CD8-positive, alpha-beta T cell (primary cell): ENCODE measurements at regions of chr7 and their contacts with region 1.

Region 1: DNA sequence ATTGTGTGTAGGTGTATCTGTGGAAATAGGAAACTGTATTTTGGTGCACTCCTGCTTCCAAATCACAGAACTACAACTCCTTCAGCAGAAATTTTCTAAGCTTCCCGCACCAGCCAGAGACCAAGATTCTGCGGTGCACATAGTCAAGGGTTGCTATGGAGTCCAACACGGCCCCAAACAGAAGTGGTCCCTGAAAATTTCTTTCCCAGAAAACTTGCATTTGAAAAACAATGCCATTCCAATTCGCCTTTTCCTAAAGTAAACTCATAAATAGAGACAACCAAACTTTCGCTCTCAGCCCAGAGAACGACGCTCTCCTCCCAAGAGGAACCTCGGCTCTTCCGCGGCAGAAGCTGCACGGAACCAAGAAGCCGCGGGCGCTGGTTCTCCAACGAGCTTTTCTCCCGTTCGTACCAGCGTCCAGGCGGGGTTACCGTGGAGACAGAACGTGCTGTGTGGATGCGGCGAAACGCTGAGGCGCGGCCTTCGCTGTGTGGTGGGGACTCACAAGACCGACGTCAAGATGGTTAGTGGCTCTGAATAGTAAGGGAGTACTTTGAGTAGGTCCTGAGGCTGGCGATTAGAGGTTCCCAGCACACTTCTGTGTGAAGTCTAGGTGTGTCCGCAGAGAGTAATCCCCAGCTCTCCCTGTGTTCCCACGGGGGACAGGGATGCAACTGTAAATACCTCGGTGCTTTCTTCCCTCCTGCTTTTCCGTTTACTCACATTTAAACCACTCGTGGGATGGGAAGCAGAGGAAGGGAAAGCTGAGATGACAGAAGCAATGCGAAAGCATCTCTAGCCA is 24.0 kb upstream of the ZC3HAV1 start:
- DNase-seq: peak; percentile 81 to 94 (median 89)
- ATAC-seq: peak; percentile 98
- H3K4me3 ChIP-seq: peak overlapping the region; percentile 60 to 63
- H3K4me3 Mint-ChIP-seq: peak overlapping the region; percentile 87
- H3K27ac ChIP-seq: peak overlapping the region; percentile 62 to 63
- H3K27ac Mint-ChIP-seq: peak overlapping the region; percentile 83
- H3K4me1 ChIP-seq: peaks cover 7% of the 10 kb centered on the region
- H3K4me1 Mint-ChIP-seq: peaks cover 13% of the 10 kb centered on the region
- H3K27me3 ChIP-seq: no peaks in the 10 kb centered on the region
- H3K27me3 Mint-ChIP-seq: no peaks in the 10 kb centered on the region
- CTCF ChIP-seq: no peak

Region 2: GRCh38 chr7:138002096-138002827 is 1131.3 kb before region 1 on chr7:
- CTCF ChIA-PET with region 1: no interaction called
- POLR2A ChIA-PET with region 1: no interaction called
- intact Hi-C with region 1: loop called in 1 of 2 experiments (anchors 5 kb)
- DNase-seq: peak; percentile 96 to 100 (median 98)
- ATAC-seq: peak; percentile 88
- H3K4me3 ChIP-seq: peak overlapping the region; percentile 81 to 97
- H3K4me3 Mint-ChIP-seq: peak overlapping the region; percentile 90
- H3K27ac ChIP-seq: peak overlapping the region; percentile 72 to 85
- H3K27ac Mint-ChIP-seq: peak overlapping the region; percentile 91
- H3K4me1 ChIP-seq: peaks cover 11% of the 10 kb centered on the region
- H3K4me1 Mint-ChIP-seq: peaks cover 33% of the 10 kb centered on the region
- H3K27me3 ChIP-seq: no peaks in the 10 kb centered on the region
- H3K27me3 Mint-ChIP-seq: no peaks in the 10 kb centered on the region
- CTCF ChIP-seq: peak; percentile 96

Region 3: DNA sequence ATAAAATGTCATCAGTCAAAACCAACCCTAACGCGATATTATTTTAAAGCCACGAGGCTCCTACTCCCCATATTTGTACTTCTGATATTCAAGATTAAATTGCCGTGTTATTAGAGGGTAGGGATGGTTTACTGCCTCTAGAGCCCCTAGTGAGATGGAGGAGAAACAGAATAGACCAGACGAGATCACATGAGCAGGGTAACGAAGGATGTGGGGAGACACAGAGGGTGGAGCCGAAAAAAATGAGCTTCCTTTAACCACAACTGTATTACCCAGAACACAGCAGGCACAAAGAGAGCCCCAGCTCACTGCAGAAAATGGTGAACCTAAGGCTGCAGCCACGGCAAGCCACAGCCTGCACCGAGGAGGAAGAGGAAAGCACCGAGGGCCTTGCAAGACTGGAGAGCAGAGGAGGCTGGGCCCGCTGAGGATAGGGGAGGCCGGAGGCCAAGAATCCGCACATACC is 38.3 kb before region 1 on chr7:
- CTCF ChIA-PET with region 1: interaction called, 4 read pairs
- POLR2A ChIA-PET with region 1: interaction called, 23 read pairs
- intact Hi-C with region 1: no loop called
- DNase-seq: peak; percentile 57 to 96 (median 82)
- ATAC-seq: peak; percentile 84
- H3K4me3 ChIP-seq: peak overlapping the region; percentile 34 to 53
- H3K4me3 Mint-ChIP-seq: peak overlapping the region; percentile 84
- H3K27ac ChIP-seq: peak overlapping the region; percentile 61 to 76
- H3K27ac Mint-ChIP-seq: peak overlapping the region; percentile 95
- H3K4me1 ChIP-seq: peaks cover 82% of the 10 kb centered on the region
- H3K4me1 Mint-ChIP-seq: peaks cover 86% of the 10 kb centered on the region
- H3K27me3 ChIP-seq: no peaks in the 10 kb centered on the region
- H3K27me3 Mint-ChIP-seq: no peaks in the 10 kb centered on the region
- CTCF ChIP-seq: no peak

Region 4: GRCh38 chr7:139109188-139109982 is 24.2 kb before region 1 on chr7 and contains the start of gene ZC3HAV1:
- CTCF ChIA-PET with region 1: interaction called, 8 read pairs
- POLR2A ChIA-PET with region 1: interaction called, 4 read pairs
- intact Hi-C with region 1: loop called (anchors 1 kb)
- DNase-seq: peak; percentile 78 to 97 (median 89)
- ATAC-seq: peak; percentile 87
- H3K4me3 ChIP-seq: peak within 1 kb of the TSS; percentile 81 to 99
- H3K4me3 Mint-ChIP-seq: peak within 1 kb of the TSS; percentile 96
- H3K27ac ChIP-seq: peak within 1 kb of the TSS; percentile 97 to 98
- H3K27ac Mint-ChIP-seq: peak within 1 kb of the TSS; percentile 99
- H3K4me1 ChIP-seq: peaks cover 18% of the 10 kb centered on the region
- H3K4me1 Mint-ChIP-seq: peaks cover 42% of the 10 kb centered on the region
- H3K27me3 ChIP-seq: no peaks in the 10 kb centered on the region
- H3K27me3 Mint-ChIP-seq: no peaks in the 10 kb centered on the region
- CTCF ChIP-seq: no peak
- total RNA-seq, gene ZC3HAV1: 194 to 198 TPM

Region 5: GRCh38 chr7:139340037-139340807 is 206.7 kb after region 1 on chr7:
- CTCF ChIA-PET with region 1: no interaction called
- POLR2A ChIA-PET with region 1: interaction called, 4 read pairs
- intact Hi-C with region 1: loop called (anchors 1 to 5 kb)
- DNase-seq: peak; percentile 95 to 100 (median 97)
- ATAC-seq: peak; percentile 80
- H3K4me3 ChIP-seq: peak overlapping the region; percentile 69 to 85
- H3K4me3 Mint-ChIP-seq: peak overlapping the region; percentile 98
- H3K27ac ChIP-seq: peak overlapping the region; percentile 94 to 98
- H3K27ac Mint-ChIP-seq: peak overlapping the region; percentile 100
- H3K4me1 ChIP-seq: peaks cover 13% of the 10 kb centered on the region
- H3K4me1 Mint-ChIP-seq: peaks cover 32% of the 10 kb centered on the region
- H3K27me3 ChIP-seq: no peaks in the 10 kb centered on the region
- H3K27me3 Mint-ChIP-seq: peaks cover 2% of the 10 kb centered on the region
- CTCF ChIP-seq: peak; percentile 36